Activated naive CD8-positive, alpha-beta T cell treated with anti-CD3 and anti-CD28 coated beads, Interleukin-2, amount 10 ng/mL, durations not matched to agents 7 days and 5 days (primary cell): ENCODE measurements at regions of chr19 and their contacts with region 1.

Region 1: DNA sequence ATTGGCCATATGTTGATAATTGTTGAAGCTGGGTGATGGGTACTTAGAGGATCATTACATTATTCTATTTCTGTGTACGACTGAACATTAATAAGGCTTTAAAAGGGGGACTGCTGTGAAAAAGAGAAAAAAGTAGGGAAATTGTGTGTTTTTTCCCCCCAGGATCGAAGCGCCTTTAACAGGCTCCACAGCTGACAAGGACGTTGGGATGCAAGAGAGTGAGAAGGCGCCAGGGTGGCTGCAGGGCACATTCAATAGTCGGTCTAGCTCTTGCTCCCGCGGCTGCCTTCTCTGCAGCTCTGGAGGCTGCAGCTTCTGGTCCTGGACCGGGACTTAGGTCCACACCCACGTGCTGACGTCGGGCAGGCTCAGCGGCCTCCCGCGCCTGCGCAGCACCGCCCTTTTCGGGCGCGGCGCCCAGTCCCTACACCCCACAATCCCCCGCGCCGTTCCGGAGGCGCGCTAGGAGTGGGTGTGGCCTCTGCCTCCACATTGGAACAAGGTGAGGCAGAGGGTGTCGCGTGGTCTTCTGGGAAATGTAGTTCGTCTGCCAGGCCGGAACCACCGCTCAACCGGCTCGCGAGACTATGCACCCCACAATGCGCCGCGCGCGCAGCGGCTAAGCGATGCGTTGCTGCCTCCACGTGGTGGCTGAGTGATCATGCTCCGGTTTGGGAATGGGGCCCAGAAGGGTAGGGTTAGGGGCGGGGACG is 4.9 kb upstream of the LRFN3 start:
- DNase-seq: peak; percentile 99
- ATAC-seq: peak; percentile 93
- H3K4me3 Mint-ChIP-seq: peak overlapping the region; percentile 77
- H3K27ac Mint-ChIP-seq: peak overlapping the region; percentile 87
- H3K4me1 Mint-ChIP-seq: peaks cover 29% of the 10 kb centered on the region
- H3K27me3 Mint-ChIP-seq: no peaks in the 10 kb centered on the region

Region 2: GRCh38 chr19:35879770-35880317 is 51.5 kb before region 1 on chr19:
- POLR2A ChIA-PET with region 1: interaction called, 30 read pairs
- DNase-seq: peak; percentile 94
- ATAC-seq: peak; percentile 75
- H3K4me3 Mint-ChIP-seq: no peak overlapping the region
- H3K27ac Mint-ChIP-seq: no peak overlapping the region
- H3K4me1 Mint-ChIP-seq: peaks cover 9% of the 10 kb centered on the region
- H3K27me3 Mint-ChIP-seq: peaks cover 23% of the 10 kb centered on the region

Region 3: DNA sequence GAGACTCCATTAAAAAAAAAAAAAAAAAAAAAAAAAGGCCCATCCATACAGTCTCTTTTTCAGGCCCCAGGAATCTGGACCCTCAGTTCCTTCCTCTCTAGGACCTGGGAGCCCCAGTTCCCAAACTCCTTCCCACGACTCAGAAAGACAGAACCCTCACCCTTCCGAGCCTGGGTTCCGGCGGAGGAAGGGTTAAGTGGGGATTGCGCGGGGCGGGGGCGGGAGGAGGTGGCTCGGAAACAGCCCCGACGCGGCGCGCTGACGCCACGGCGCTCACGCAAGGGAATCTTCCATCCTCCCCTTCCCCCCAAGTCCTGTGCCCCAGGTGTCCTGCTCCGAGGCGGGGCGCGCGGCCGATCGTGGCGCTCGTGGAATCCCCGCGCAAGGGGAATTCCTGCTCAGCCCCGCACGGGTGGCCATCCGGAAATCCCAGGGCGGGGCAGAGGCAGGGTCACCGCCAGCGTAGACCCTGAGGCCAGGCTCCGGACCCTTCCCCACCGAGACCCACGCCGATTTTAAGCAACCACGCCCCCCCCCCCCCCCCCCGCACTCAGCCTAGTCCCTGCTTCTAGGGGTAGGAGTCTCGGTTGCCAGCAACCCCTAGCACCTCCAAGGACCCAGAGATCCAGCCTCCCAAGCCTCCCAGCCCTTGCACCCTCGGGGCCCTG is 31.6 kb before region 1 on chr19:
- POLR2A ChIA-PET with region 1: interaction called, 41 read pairs
- DNase-seq: peak; percentile 87
- ATAC-seq: peak; percentile 41
- H3K4me3 Mint-ChIP-seq: peak overlapping the region; percentile 92
- H3K27ac Mint-ChIP-seq: peak overlapping the region; percentile 97
- H3K4me1 Mint-ChIP-seq: peaks cover 34% of the 10 kb centered on the region
- H3K27me3 Mint-ChIP-seq: no peaks in the 10 kb centered on the region

Region 4: GRCh38 chr19:35944553-35944952 is 13.2 kb after region 1 on chr19:
- POLR2A ChIA-PET with region 1: no interaction called
- DNase-seq: no peak
- ATAC-seq: no peak
- H3K4me3 Mint-ChIP-seq: no peak overlapping the region
- H3K27ac Mint-ChIP-seq: no peak overlapping the region
- H3K4me1 Mint-ChIP-seq: peaks cover 3% of the 10 kb centered on the region
- H3K27me3 Mint-ChIP-seq: no peaks in the 10 kb centered on the region

Region 5: GRCh38 chr19:36136964-36137686 is 205.8 kb after region 1 on chr19:
- POLR2A ChIA-PET with region 1: no interaction called
- DNase-seq: no peak
- ATAC-seq: no peak
- H3K4me3 Mint-ChIP-seq: no peak overlapping the region
- H3K27ac Mint-ChIP-seq: peak overlapping the region; percentile 54
- H3K4me1 Mint-ChIP-seq: peaks cover 24% of the 10 kb centered on the region
- H3K27me3 Mint-ChIP-seq: peaks cover 2% of the 10 kb centered on the region